CD14-positive monocyte (primary cell): ENCODE measurements at regions of chr1 and their contacts with region 1.

Region 1: GRCh38 chr1:223748773-223749733 is 36.7 kb downstream of the CAPN2 start:
- DNase-seq: peak; percentile 46 to 67 (median 63)
- H3K4me3 ChIP-seq: peak overlapping the region; percentile 17 to 74 (median 32)
- H3K4me3 Mint-ChIP-seq: peak overlapping the region; percentile 77 to 83
- H3K27ac ChIP-seq: peak overlapping the region; percentile 3 to 23
- H3K27ac Mint-ChIP-seq: peak overlapping the region in 5 of 7 donors; percentile 5 to 87 (median 42)
- H3K4me1 ChIP-seq: peaks cover 12 to 26% of the 10 kb centered on the region in 2 donors
- H3K4me1 Mint-ChIP-seq: peaks cover 24% of the 10 kb centered on the region
- H3K27me3 ChIP-seq: no peaks in the 10 kb centered on the region
- H3K27me3 Mint-ChIP-seq: peaks cover 0 to 2% (median 0%) of the 10 kb centered on the region in 3 donors
- CTCF ChIP-seq: peak; percentile 97

Region 2: DNA sequence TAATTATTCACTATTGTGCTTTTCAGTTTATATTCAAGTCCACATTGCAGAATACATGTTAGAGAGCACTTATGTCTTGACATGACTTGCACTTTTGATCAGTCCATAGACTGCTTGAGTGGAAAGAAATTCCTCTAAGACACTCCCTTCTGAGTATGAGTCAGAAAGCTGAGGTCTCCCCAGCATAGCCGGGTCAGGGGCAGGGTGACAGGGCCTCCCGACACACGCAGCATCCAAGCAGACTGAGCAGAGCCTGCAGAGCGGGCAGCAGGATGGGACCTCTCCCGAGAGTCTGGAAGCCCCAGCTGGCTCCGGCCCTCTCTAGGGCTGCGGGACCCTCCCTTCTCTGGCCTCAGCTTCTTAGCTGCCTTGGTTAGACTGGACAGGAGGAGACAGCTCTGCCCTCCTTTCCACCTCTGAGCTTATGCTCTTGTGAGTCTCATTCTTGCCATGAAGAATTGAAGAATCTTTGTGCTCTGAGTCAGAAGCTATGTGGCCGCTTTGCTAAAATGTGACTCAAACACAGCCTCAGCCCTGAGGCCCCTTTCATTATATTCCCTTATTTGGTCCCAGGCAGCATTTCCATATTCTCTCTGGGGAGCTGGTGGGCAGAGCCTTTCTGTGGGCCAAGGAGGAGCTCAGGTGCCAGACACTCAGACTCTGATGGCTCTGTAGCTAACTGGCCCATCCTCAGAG is 48.0 kb before region 1 on chr1:
- intact Hi-C with region 1: loop called (anchors 2 kb)
- DNase-seq: peak in 2 of 3 donors; percentile 30 to 53
- H3K4me3 ChIP-seq: no peak overlapping the region
- H3K4me3 Mint-ChIP-seq: no peak overlapping the region
- H3K27ac ChIP-seq: no peak overlapping the region
- H3K27ac Mint-ChIP-seq: peak overlapping the region in 4 of 7 donors; percentile 43 to 66 (median 56)
- H3K4me1 ChIP-seq: peaks cover 10 to 11% of the 10 kb centered on the region in 2 donors
- H3K4me1 Mint-ChIP-seq: peaks cover 26% of the 10 kb centered on the region
- H3K27me3 ChIP-seq: no peaks in the 10 kb centered on the region
- H3K27me3 Mint-ChIP-seq: peaks cover 3 to 6% (median 4%) of the 10 kb centered on the region in 3 donors
- CTCF ChIP-seq: no peak